Activated CD4-positive, alpha-beta T cell treated with anti-CD3 and anti-CD28 coated beads for 36 hours (primary cell): ENCODE measurements at regions of chr10 and their contacts with region 1.

Region 1: DNA sequence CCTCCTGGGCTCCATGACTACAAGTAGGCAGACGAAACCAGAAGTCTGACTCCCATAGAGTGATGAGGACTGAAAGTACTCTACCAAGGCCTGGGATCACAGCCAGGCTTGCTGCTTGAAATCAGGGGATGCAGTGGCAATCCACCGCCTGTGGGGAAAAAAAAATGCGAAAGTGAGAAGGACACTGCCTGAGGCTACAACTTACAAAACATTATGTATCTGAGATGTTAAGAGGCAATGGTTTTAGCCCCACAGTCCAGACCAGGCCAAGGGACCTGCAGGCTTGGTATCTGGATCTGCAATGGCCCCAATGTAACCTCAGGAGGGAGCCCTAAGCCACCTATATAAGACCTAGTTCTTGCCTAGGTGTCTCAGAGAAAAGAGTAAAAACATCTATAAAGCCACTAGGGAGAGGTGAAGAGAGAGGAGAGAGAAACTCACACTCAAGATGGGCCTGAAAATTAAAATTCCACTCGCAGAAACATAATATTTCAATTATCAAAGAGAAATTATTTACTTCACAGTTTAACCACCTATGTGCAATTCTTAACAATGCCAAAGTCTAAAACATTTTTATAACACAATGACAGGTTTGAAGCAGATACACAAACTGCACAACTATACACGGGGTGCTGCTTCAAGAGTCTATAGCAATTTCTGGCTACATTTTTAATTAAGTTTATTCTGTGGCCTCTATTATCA is 13.9 kb downstream of the DNAJC1 start:
- DNase-seq: peak; percentile 57
- ATAC-seq: peak; percentile 94
- H3K4me3 Mint-ChIP-seq: no peak overlapping the region
- H3K27ac Mint-ChIP-seq: no peak overlapping the region
- H3K4me1 Mint-ChIP-seq: peaks cover 2% of the 10 kb centered on the region
- H3K27me3 Mint-ChIP-seq: no peaks in the 10 kb centered on the region

Region 2: DNA sequence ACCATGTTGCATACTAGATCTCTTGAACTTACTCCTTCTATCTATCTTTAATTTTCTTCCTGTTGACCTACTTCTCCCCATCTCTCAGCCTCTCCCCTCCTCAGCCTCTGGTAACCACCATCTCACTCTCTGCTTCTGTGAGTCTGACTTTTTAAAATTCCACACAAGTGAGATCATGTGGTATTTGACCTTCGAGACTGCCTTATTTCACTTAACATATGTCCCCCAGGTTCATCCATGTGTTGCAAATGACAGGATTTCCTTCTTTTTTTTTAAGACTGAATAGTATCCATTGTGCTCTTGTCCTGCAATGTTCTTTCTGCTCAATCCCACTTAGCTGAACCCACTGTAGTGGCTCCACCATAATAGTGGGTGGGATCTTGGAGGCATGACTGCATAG is 65.4 kb after region 1 on chr10:
- CTCF ChIA-PET with region 1: no interaction called
- POLR2A ChIA-PET with region 1: no interaction called
- intact Hi-C with region 1: no loop called
- DNase-seq: no peak
- ATAC-seq: no peak
- H3K4me3 Mint-ChIP-seq: no peak overlapping the region
- H3K27ac Mint-ChIP-seq: no peak overlapping the region
- H3K4me1 Mint-ChIP-seq: no peaks in the 10 kb centered on the region
- H3K27me3 Mint-ChIP-seq: peaks cover 6% of the 10 kb centered on the region

Region 3: DNA sequence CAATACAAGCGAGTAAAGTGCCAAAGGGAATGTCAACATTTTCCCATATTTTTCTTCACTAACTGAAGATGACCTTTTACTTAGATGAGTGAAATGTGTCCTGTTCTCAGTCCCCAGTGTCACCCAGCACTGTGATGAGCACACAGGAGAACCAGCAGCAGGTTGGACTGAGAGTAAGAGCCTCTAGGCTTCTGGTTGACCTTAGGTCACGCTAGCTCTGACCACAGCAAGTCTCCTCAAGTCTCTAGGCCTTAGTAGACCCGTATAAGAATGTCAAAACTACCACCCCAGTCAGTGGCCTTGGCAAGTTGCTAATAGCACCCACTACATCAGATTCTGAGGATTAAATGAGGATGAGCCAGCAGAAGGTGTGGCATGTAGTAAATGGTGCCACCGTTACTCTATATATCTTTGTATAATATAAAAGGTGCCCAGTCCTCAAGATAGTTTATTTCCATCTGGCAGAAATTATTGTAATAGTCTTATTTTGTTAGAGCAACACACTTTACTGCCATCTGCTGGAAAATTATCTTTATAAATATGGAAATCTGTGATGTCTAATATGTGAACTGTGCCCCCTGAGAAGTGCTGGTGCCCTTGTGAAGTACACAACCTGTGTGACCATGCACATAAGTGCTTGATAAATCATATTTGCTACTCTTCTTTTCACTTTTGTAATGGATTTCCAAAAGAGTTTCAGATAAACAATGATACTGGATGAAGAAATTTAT is 431.3 kb after region 1 on chr10:
- CTCF ChIA-PET with region 1: no interaction called
- POLR2A ChIA-PET with region 1: no interaction called
- intact Hi-C with region 1: loop called in 1 of 2 experiments (anchors 1 kb)
- DNase-seq: no peak
- ATAC-seq: peak; percentile 60
- H3K4me3 Mint-ChIP-seq: no peak overlapping the region
- H3K27ac Mint-ChIP-seq: no peak overlapping the region
- H3K4me1 Mint-ChIP-seq: no peaks in the 10 kb centered on the region
- H3K27me3 Mint-ChIP-seq: no peaks in the 10 kb centered on the region

Region 4: DNA sequence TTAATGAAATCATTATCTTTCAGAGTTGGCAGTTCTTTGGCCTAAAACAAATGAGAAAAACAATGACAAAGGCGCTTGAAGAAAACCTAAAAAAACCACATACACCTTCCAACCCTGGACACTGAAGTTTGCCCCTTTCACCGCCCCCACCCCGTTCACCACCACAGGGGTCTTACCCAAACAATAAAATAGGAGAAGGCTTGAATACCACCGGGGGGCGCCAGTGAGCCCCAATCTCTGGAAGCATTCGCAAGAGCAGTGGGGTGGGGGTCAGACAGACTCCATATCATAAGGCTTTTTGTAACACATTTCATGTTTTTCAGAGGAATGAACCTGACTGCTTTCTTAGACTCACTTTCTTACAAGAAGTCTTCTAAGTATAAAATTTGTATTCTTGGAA is 561.1 kb after region 1 on chr10:
- CTCF ChIA-PET with region 1: interaction called, 3 read pairs
- POLR2A ChIA-PET with region 1: no interaction called
- intact Hi-C with region 1: loop called (anchors 5 to 10 kb)
- DNase-seq: peak; percentile 81
- ATAC-seq: no peak
- H3K4me3 Mint-ChIP-seq: no peak overlapping the region
- H3K27ac Mint-ChIP-seq: no peak overlapping the region
- H3K4me1 Mint-ChIP-seq: peaks cover 13% of the 10 kb centered on the region
- H3K27me3 Mint-ChIP-seq: no peaks in the 10 kb centered on the region